ENCODE measurements at regions of chr15 and their contacts with region 1.

Region 1: DNA sequence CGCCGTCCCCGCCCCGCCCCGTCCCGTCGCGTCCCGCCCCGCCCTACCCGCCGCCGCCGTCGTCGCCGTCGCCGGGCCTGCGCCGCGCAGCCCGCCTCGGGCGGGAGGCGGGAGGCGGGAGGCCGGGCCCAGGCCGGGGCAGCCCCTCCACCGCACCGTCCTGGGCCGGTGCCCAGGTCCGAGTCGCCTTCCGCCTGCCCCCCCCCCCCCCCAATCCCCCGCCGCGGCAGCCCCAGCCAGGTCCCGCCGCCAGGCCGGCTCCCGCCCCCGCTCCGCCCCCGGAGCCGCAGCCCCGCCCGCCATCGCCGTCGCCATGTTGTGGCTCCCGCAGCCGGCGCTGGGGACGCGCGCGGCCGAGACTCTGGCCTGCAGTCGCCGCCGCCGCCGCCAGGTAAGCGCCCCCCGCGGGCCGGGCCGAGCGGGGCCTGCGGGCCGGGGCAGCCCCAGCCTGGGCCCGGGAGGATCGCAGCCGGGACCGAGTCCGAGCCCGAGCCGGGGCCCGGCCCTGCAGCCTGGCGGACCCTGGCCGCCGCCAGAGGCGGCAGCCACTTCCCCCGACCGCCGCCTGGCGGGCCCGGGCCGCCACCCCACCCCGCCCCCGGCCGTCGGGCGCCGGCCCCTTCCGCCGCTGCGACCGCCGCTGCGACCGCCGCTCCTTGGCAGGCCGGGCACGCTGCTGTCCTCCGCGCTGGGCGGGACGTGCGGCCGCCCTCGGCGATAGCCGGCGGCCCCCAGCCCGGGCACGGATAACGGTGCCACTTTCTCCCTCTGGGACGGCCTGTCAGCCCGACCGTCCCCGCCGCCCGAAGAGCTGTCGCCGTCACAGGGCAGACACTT is at the start of gene ZNF592:
- DNase-seq: peak; percentile 95
- H3K4me3 ChIP-seq: peak within 1 kb of the TSS; percentile 74 to 98 (median 92)
- H3K27ac ChIP-seq: peak within 1 kb of the TSS; percentile 99 to 100 (median 100)
- H3K4me1 ChIP-seq: peaks cover 51 to 72% (median 64%) of the 10 kb centered on the region in 4 donors
- H3K27me3 ChIP-seq: no peaks in the 10 kb centered on the region
- CTCF ChIP-seq: peak in 2 of 3 experiments; percentile 48 to 49
- EP300 ChIP-seq: no peak
- POLR2A ChIP-seq: no peak
- total RNA-seq, gene ZNF592: 13.8 to 22.3 (median 20.2) TPM

Region 2: DNA sequence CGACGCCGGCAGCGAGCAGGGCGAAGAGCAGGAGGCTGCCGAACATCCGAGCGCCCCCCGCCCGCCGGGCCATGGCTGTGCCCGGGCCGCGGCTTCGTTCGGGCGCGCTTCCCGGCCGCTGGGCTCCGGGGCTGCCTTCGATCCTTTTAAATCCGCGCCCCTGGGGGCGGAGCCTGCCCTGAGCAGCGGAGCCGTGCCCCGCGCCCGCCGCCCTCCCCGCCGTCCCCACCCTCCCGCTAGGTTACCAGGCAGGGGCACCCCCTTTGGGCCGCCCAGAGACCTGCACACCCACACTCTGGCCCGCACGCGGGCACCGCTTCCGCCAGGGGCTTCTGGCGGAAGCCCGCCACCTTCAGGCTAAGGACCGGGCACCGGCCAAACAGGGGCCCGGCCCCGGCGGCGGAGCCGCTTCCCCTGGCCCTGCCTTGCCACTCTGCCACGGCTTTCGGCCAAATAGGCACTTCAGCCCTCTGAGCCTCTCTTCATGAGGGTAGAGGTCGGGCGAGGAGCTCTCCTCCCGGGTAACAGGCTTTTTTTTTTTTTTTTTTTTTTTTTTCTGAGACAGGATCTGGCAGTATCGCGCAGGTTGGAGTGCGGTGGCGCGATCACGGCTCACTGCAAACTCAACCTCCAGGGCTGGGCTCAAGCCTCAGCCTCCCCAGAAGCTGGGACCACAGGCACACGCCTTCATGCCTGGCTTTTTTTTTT is 90.3 kb before region 1 on chr15 and contains the start of gene NMB:
- intact Hi-C with region 1: loop called (anchors 5 kb)
- DNase-seq: no peak
- H3K4me3 ChIP-seq: peak within 1 kb of the TSS; percentile 62 to 79 (median 73)
- H3K27ac ChIP-seq: peak within 1 kb of the TSS; percentile 83 to 90 (median 88)
- H3K4me1 ChIP-seq: peaks cover 21 to 38% (median 31%) of the 10 kb centered on the region in 4 donors
- H3K27me3 ChIP-seq: no peaks in the 10 kb centered on the region
- CTCF ChIP-seq: peak; percentile 68 to 80 (median 71)
- EP300 ChIP-seq: no peak
- POLR2A ChIP-seq: no peak
- total RNA-seq, gene NMB: 3.6 to 7.4 (median 5.1) TPM

Region 3: DNA sequence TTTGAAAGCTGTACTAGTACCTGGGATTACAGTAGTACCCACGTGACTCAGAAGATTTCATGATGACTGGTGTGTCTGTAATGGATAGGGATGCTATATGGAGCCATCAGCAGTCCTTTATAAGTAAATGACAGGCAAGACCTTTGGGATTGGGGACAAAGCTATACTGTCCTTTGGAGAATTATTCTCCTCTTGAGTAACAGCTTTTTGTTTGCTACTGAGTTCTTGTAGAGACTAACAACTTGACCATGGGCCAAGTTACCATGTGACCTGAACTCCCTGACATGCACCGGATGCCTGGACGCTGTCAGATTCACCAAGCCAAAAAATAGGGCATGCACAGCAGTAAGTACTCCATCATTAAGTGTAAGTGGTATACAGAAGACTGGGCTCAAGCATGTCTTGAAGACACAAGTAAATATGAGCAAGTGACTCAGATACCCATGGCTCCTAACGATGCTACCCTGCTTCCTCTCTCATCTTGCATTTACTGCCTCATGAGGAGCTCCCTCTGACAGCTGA is 45.5 kb before region 1 on chr15:
- intact Hi-C with region 1: loop called (anchors 5 kb)
- DNase-seq: no peak
- H3K4me3 ChIP-seq: no peak overlapping the region
- H3K27ac ChIP-seq: peak overlapping the region; percentile 13 to 55 (median 32)
- H3K4me1 ChIP-seq: peaks cover 19 to 27% (median 20%) of the 10 kb centered on the region in 4 donors
- H3K27me3 ChIP-seq: no peaks in the 10 kb centered on the region
- CTCF ChIP-seq: no peak
- EP300 ChIP-seq: no peak
- POLR2A ChIP-seq: no peak

Region 4: GRCh38 chr15:84818261-84819131 is 70.0 kb after region 1 on chr15:
- intact Hi-C with region 1: loop called (anchors 5 kb)
- DNase-seq: no peak
- H3K4me3 ChIP-seq: peak overlapping the region; percentile 52 to 67 (median 58)
- H3K27ac ChIP-seq: peak overlapping the region; percentile 83 to 89 (median 86)
- H3K4me1 ChIP-seq: peaks cover 52 to 70% (median 66%) of the 10 kb centered on the region in 4 donors
- H3K27me3 ChIP-seq: no peaks in the 10 kb centered on the region
- CTCF ChIP-seq: no peak
- EP300 ChIP-seq: no peak
- POLR2A ChIP-seq: no peak

Region 5: DNA sequence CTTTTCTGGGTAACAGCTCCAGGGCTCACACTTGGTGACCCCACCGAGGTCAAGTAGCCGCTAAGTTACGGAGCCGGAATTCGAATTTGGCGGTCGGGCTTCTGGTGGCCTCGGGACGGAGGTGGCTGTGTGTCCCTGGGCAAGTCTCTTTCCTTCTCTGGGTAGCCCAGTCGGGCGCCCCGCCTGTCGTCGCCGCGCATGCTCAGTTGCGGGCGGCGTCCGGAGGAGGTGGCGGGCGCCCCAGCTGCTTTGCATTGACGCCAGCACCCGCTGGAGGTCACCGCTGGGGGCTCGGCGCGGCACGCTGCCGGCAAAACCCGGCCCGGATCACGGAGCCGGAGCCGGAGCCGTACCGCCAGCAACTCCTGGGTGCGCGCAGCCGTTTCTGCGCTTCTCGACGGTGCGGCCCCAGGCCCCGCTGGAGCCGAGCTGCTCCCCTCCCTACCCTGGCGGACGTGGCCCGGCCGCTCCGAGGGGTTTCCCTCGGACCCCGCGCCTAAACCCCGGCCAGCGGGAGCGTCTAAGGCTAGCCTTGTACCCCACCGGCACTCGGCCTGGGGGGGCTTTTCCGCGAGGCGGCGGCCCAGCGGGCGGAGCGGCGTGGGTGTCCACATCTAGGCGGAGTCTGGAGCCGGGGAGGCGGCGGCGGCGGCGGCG is 232.7 kb after region 1 on chr15:
- intact Hi-C with region 1: no loop called
- DNase-seq: peak; percentile 96
- H3K4me3 ChIP-seq: peak overlapping the region; percentile 78 to 95 (median 87)
- H3K27ac ChIP-seq: peak overlapping the region; percentile 93 to 98 (median 96)
- H3K4me1 ChIP-seq: peaks cover 28 to 49% (median 45%) of the 10 kb centered on the region in 4 donors
- H3K27me3 ChIP-seq: no peaks in the 10 kb centered on the region
- CTCF ChIP-seq: peak in 2 of 3 experiments; percentile 27 to 42
- EP300 ChIP-seq: no peak
- POLR2A ChIP-seq: peak; percentile 69